H1 (cell line): ENCODE measurements at regions of chr9 and their contacts with region 1.

Region 1: DNA sequence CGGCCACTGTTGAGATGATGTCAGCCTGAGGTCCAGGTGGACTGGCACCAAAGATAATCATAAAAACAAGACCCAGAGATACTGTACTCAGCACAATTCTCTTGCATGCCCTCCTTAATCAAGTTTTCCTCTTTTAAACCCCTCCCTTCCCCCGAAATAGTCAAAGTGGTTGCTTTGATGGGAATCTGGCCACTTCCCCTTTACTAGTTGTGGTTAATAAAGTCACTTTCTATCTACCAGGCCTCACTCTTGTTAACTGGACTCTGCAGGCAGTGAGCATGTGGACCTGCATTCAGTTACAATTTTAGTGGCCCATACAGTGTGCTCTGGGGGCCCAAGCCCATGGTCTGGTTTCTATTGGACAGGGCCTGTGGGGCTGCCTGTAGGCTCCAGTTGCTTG is 17.5 kb downstream of the FBP2 start:
- DNase-seq: peak in 1 of 2 experiments; percentile 27
- H3K4me3 ChIP-seq: no peak overlapping the region
- H3K27ac ChIP-seq: no peak overlapping the region
- H3K4me1 ChIP-seq: no peaks in the 10 kb centered on the region
- H3K27me3 ChIP-seq: peaks cover 0 to 2% (median 0%) of the 10 kb centered on the region in 4 experiments; a peak in 1 of 7 replicates
- CTCF ChIP-seq: no peak
- EP300 ChIP-seq: no peak
- POLR2A ChIP-seq: no peak
- RAD21 ChIP-seq: no peak

Region 2: GRCh38 chr9:94586814-94587213 is 10.7 kb after region 1 on chr9:
- CTCF ChIA-PET with region 1: interaction called, 4 read pairs
- POLR2A ChIA-PET with region 1: interaction called, 17 read pairs
- DNase-seq: no peak
- H3K4me3 ChIP-seq: no peak overlapping the region
- H3K27ac ChIP-seq: no peak overlapping the region
- H3K4me1 ChIP-seq: no peaks in the 10 kb centered on the region
- H3K27me3 ChIP-seq: no peaks in the 10 kb centered on the region
- CTCF ChIP-seq: no peak
- EP300 ChIP-seq: no peak
- POLR2A ChIP-seq: no peak
- RAD21 ChIP-seq: no peak

Region 3: GRCh38 chr9:94613045-94613444 is 36.9 kb after region 1 on chr9:
- CTCF ChIA-PET with region 1: no interaction called
- POLR2A ChIA-PET with region 1: no interaction called
- DNase-seq: no peak
- H3K4me3 ChIP-seq: no peak overlapping the region
- H3K27ac ChIP-seq: no peak overlapping the region
- H3K4me1 ChIP-seq: peaks cover 0 to 8% (median 2%) of the 10 kb centered on the region in 4 experiments; a peak in 3 of 7 replicates
- H3K27me3 ChIP-seq: no peaks in the 10 kb centered on the region
- CTCF ChIP-seq: peak in 2 of 3 experiments; percentile 18 to 47; a peak in 2 of 4 replicates
- EP300 ChIP-seq: no peak
- POLR2A ChIP-seq: no peak
- RAD21 ChIP-seq: peak; percentile 23 to 47; a peak in 3 of 4 replicates